K562 (cell line): ENCODE measurements at regions of chr17 and their contacts with region 1.

Region 1: DNA sequence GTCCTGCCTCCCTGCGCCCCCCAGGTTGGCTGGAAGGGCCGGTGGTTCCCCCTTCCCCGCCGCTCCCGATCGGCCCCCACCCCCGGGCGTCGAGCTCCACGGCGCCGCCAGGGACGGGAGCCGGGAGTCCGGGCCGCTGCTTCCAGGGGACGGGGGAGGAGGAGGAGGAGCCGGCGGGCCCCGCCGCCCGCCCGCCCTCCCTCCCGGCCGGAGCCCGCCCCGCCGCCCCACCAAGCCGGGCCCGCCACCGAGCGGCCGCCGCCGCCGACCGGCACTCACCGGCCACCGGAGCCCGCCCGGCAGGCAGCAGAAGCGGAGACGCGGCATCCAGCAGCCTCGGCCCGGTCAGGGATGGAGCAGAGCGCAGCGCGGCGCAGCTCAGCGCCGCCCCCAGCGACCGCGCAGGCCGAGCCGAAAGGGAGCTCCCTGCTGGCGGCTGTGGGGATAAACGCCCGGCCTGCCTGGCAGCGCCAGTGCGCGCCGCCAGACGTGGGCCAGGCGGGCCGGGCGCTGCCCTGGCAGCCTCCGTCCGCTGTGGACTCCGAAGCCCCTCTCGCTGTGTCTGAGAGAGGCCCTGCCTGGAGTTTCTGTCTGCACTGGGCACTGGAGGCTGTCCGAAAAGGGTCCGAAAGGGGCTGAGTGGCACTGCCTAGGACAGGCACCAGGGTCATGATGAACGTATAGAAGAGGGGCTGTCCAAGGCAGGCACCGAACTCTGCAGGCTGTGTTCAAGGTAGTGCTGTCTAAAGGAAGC is at the start of gene MYO18A:
- DNase-seq: peak; percentile 81 to 86 (median 84)
- ATAC-seq: peak; percentile 72
- H3K4me3 ChIP-seq: peak within 1 kb of the TSS; percentile 49
- H3K27ac ChIP-seq: peak within 1 kb of the TSS; percentile 97
- H3K4me1 ChIP-seq: peaks cover 30 to 45% of the 10 kb centered on the region in 2 experiments
- H3K27me3 ChIP-seq: no peaks in the 10 kb centered on the region
- CTCF ChIP-seq: peak; percentile 87 to 99 (median 98)
- EP300 ChIP-seq: no peak
- POLR2A ChIP-seq: no peak
- RAD21 ChIP-seq: peak; percentile 80 to 92
- polyA plus RNA-seq, gene MYO18A: 2.5 TPM

Region 2: DNA sequence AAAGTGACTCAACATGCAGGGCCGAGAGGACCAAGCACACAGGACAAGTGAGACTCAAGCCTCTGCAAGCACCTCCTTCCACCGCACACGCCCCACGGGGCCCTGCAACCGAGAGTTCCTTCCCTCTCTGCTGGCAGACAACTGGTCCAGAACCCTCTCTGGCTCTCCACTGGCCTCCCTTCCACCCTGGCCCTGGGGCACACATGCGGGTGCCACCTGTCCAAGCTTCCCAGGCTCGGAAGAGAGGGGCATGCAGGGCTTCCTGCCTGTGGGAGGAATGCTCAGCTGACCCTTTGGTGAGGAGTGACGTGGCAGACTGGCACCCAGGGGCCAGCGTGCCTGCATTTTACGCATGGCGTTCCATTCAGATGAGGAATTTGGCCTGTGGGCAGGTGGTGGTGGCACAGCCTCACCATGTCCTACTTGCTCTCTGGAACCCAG is 77.5 kb before region 1 on chr17:
- CTCF ChIA-PET with region 1: no interaction called
- POLR2A ChIA-PET with region 1: no interaction called
- in situ Hi-C with region 1: no loop called
- intact Hi-C with region 1: no loop called
- DNase-seq: no peak
- ATAC-seq: no peak
- H3K4me3 ChIP-seq: no peak overlapping the region
- H3K27ac ChIP-seq: no peak overlapping the region
- H3K4me1 ChIP-seq: peaks cover 0 to 3% of the 10 kb centered on the region in 2 experiments; a peak in 1 of 5 replicates
- H3K27me3 ChIP-seq: no peaks in the 10 kb centered on the region
- CTCF ChIP-seq: no peak
- EP300 ChIP-seq: no peak
- POLR2A ChIP-seq: no peak
- RAD21 ChIP-seq: no peak

Region 3: DNA sequence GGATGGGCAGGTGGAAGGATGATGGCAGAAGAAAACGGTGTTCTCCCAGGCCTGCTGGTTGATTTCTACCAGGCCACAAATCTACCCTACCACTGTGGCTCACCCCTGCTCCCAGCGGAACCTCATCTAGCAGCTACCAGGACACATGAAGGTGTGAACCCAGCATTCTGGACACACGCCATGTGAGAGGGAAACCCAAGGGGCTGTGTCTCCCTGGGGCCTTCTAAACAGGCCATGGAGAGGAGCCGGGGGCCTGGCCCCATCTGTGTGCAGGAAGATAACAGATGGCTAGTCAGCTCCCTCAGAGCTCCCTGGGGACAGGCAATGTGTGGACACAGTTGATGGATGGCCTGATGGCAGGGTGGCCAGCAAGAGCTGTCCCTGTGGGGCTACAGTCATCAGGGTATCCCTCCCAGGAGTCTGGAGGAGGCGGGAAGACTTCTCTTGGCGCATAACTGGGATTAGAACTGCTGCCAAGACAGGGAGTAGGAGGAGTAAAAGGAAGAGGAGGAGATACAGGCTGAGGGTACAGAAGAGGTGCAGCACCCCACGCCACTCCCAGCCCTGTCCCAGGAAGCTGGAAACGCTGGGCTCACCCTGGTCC is 17.4 kb before region 1 on chr17:
- CTCF ChIA-PET with region 1: no interaction called
- POLR2A ChIA-PET with region 1: interaction called, 74 read pairs
- in situ Hi-C with region 1: no loop called
- intact Hi-C with region 1: loop called (anchors 2 kb)
- DNase-seq: peak; percentile 72 to 95 (median 86)
- ATAC-seq: peak; percentile 96
- H3K4me3 ChIP-seq: no peak overlapping the region
- H3K27ac ChIP-seq: peak overlapping the region; percentile 58
- H3K4me1 ChIP-seq: peaks cover 38 to 48% of the 10 kb centered on the region in 2 experiments
- H3K27me3 ChIP-seq: no peaks in the 10 kb centered on the region
- CTCF ChIP-seq: no peak
- EP300 ChIP-seq: peak; percentile 81
- POLR2A ChIP-seq: no peak
- RAD21 ChIP-seq: peak in 1 of 2 experiments; percentile 33; a peak in 1 of 4 replicates